ENCODE measurements at regions of chr15 and their contacts with region 1.

Region 1: DNA sequence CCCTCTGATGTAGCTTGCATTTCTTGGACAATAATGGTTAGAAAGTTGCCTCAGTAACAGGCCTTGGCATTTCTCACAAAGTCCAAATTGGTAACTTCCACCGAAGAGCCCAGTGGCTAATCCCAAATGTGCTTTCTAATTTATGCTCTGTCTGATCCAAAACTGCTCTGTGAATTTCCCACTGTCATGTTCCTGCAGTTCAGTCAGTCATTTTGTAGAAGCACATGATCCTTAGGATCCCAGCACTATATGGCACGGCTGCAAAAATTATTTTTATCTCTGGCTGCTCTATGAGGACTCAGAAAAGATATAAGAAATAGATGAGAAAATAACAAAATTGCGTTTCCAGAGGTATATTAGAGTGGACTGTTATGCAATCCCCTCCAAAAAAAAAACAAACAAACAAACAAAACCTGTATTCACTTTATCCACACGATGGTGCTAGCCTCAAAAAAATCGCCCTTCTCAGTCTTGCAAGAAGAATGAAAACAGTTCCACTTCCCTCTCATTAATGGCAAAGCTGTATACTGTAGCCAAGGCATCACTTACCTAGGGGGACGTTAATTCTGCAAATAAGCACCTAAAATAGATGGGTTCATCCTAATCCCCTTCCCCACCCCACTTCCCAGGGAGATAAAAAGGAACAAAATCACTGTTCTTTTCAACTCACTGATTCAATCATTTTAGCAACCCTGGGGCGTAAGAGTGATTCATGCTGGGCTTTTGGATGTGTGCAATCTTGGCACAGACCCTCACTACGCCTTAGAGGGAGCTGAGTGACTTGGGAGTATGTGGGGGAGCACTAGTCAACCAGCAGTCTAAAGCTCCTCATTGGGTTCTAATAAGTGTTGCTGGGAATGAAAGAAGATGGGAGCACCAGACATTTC is 61.3 kb downstream of the TMCO5A start:
- DNase-seq: no peak
- ATAC-seq: peak; percentile 36 to 42
- H3K4me3 ChIP-seq: no peak overlapping the region
- H3K27ac ChIP-seq: no peak overlapping the region
- H3K4me1 ChIP-seq: no peaks in the 10 kb centered on the region
- H3K27me3 ChIP-seq: no peaks in the 10 kb centered on the region
- CTCF ChIP-seq: peak in 3 of 5 experiments; percentile 14 to 53 (median 53)
- POLR2A ChIP-seq: no peak

Region 2: GRCh38 chr15:37921527-37922385 is 73.9 kb before region 1 on chr15:
- in situ Hi-C with region 1: no loop called
- intact Hi-C with region 1: no loop called
- DNase-seq: no peak
- ATAC-seq: no peak
- H3K4me3 ChIP-seq: no peak overlapping the region
- H3K27ac ChIP-seq: no peak overlapping the region
- H3K4me1 ChIP-seq: no peaks in the 10 kb centered on the region
- H3K27me3 ChIP-seq: no peaks in the 10 kb centered on the region
- CTCF ChIP-seq: no peak
- POLR2A ChIP-seq: no peak

Region 3: DNA sequence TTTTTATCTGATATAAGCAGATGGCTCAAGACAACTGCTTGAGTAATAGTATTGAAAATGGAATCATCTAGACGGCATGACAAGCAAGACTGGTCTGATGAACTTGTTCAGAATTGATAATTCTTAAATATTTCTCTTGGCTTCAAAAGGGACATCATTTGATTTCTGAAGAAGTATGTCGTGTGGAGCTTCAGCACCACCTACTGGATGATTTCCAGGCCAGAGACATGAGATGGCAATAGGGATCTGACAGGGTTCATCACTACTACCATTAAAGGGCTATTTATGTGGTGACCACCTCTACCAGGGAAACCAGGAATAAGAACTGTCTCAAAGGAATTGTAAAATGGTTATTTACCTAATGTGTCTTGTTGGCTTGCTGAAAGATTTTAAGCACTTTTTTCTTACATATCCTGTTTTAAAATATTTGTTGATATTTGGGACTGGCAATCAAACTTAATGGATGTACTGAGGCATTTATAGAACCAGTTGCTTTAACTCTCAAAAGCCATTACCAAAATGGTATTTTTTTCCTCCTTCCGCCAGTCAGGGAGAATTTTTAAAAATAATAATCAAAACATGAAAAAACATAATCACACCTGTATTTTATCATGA is 358.7 kb after region 1 on chr15:
- in situ Hi-C with region 1: loop called (anchors 5 to 25 kb)
- intact Hi-C with region 1: no loop called
- DNase-seq: peak; percentile 5 to 29
- ATAC-seq: no peak
- H3K4me3 ChIP-seq: no peak overlapping the region
- H3K27ac ChIP-seq: no peak overlapping the region
- H3K4me1 ChIP-seq: no peaks in the 10 kb centered on the region
- H3K27me3 ChIP-seq: no peaks in the 10 kb centered on the region
- CTCF ChIP-seq: peak; percentile 49 to 76 (median 56)
- POLR2A ChIP-seq: no peak

Region 4: DNA sequence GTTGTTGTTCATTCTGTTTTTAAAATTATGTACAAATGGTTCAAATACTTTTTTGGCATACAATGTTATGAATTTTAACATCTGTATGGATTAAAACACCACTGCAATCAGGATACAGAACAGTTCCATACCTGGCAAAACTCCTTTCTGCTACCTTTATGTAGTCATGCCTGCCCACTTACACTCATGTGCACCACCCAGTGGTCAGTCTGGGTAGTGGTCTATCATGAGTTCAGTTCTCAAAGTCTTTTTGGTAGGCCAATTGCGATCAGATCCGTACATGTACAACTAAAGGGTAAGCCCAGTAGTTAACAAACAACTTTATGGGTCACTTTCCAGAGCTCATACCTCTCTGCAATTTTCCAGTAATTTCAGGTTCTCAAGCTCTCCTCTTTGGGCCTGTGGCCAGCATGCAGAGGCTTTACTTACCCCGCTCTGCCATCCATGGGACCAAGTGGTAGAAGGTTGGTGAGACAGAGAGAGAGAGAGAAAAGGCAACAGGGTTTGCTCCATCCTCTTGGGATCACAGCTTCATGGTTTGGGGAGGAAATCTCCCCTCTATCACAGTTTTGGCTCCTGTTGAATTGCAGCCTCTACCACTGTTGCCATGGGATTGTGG is 394.3 kb after region 1 on chr15:
- in situ Hi-C with region 1: no loop called
- intact Hi-C with region 1: loop called (anchors 1 kb)
- DNase-seq: peak; percentile 10 to 33
- ATAC-seq: peak in 1 of 2 donors; percentile 30
- H3K4me3 ChIP-seq: no peak overlapping the region
- H3K27ac ChIP-seq: no peak overlapping the region
- H3K4me1 ChIP-seq: no peaks in the 10 kb centered on the region
- H3K27me3 ChIP-seq: no peaks in the 10 kb centered on the region
- CTCF ChIP-seq: peak; percentile 32 to 68 (median 60)
- POLR2A ChIP-seq: no peak

Region 5: GRCh38 chr15:38414357-38414756 is 418.7 kb after region 1 on chr15:
- in situ Hi-C with region 1: loop called in 2 of 4 experiments (anchors 10 kb)
- intact Hi-C with region 1: no loop called
- DNase-seq: peak; percentile 27 to 43
- ATAC-seq: peak; percentile 60
- H3K4me3 ChIP-seq: no peak overlapping the region
- H3K27ac ChIP-seq: no peak overlapping the region
- H3K4me1 ChIP-seq: no peaks in the 10 kb centered on the region
- H3K27me3 ChIP-seq: no peaks in the 10 kb centered on the region
- CTCF ChIP-seq: peak in 4 of 5 experiments; percentile 19 to 51 (median 30)
- POLR2A ChIP-seq: no peak

Region 6: DNA sequence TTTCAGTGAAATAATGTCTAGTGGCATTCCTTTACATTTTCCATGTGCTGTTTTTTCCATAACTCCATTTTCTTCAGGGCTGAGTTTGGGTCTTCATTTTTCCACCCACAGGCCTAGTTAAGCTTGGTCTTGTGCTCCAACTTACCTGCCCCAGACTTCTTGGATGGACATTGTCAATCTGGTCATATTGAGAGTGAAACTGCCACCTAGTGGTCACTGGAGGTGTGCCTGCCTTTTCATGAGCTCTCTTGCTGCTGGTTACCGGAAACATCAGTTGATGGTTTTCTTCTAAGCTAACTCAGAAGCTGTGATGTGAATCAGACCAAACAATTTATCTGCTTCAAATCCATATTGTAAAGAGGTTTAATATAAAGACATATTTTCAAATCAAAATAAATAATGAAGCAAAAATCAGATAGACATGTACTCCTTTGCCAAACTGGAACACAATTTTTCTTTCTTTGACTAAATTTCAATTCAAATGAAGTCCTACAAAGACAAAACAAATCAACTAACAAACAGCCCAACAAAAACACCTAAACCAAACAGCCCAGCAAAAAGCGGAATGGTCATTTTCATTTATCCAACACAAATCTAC is 704.0 kb after region 1 on chr15:
- in situ Hi-C with region 1: loop called in 2 of 4 experiments (anchors 10 to 25 kb)
- intact Hi-C with region 1: no loop called
- DNase-seq: peak; percentile 6 to 17
- ATAC-seq: no peak
- H3K4me3 ChIP-seq: no peak overlapping the region
- H3K27ac ChIP-seq: no peak overlapping the region
- H3K4me1 ChIP-seq: no peaks in the 10 kb centered on the region
- H3K27me3 ChIP-seq: no peaks in the 10 kb centered on the region
- CTCF ChIP-seq: peak; percentile 40 to 73 (median 47)
- POLR2A ChIP-seq: no peak